ENCODE measurements at regions of chr1 and their contacts with region 1.

Region 1: GRCh38 chr1:179365320-179366092 is at the start of gene AXDND1:
- DNase-seq: peak; percentile 86
- H3K4me3 ChIP-seq: peak within 1 kb of the TSS; percentile 79 to 85 (median 80)
- H3K27ac ChIP-seq: peak within 1 kb of the TSS; percentile 97
- H3K4me1 ChIP-seq: peaks cover 4% of the 10 kb centered on the region
- H3K27me3 ChIP-seq: peaks cover 0 to 1% of the 10 kb centered on the region in 2 experiments
- CTCF ChIP-seq: no peak
- POLR2A ChIP-seq: peak; percentile 32
- total RNA-seq, gene AXDND1: 0.67 TPM in 1 of 2 replicates, not detected in the other

Region 2: GRCh38 chr1:179025125-179025974 is 340.2 kb before region 1 on chr1 and contains the start of gene FAM20B:
- CTCF ChIA-PET with region 1: no interaction called
- POLR2A ChIA-PET with region 1: no interaction called
- dilution Hi-C with region 1: no loop called
- intact Hi-C with region 1: loop called (anchors 1 kb)
- DNase-seq: peak; percentile 92
- H3K4me3 ChIP-seq: peak within 1 kb of the TSS; percentile 71 to 92 (median 78)
- H3K27ac ChIP-seq: peak within 1 kb of the TSS; percentile 71
- H3K4me1 ChIP-seq: peaks cover 13% of the 10 kb centered on the region
- H3K27me3 ChIP-seq: peaks cover 10 to 21% of the 10 kb centered on the region in 2 experiments
- CTCF ChIP-seq: no peak
- POLR2A ChIP-seq: peak; percentile 6
- total RNA-seq, gene FAM20B: 35.1 and 36.2 TPM in 2 replicates

Region 3: DNA sequence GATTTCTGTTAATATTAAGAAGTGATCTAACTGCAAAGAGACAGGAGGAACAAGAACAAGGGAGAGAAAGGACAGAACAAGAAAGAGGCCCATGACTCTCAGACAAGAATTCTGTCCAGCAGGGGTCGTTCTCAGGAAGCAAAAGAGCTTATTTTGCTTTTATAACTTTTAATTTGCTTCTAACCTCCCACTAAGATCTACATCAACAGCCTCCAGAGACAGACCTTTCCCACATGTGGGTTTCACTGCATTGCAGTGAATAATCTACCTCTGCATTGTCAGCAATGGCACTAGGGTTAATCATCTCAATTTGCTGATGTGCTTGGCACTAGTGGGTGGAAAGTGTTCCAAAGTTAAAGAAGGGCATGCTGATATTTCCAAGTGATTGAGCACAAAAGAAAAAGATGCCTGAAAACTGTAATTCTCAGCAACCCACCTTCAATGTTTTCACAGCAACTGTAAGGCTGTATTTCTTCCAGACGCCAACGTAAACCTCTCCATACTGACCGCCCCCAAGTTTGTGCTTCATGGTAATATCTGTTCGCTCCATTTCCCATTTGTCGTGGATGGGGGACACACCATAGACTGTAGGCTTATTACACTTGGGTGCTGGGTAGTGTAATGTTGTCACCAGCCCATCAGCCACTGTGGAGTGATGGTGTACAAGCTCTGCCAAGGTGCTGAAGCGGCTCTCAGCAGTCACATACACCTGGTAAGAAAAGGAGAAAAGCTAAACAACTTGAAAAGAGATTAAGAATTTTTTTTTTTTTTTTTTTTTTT is 244.2 kb before region 1 on chr1:
- CTCF ChIA-PET with region 1: interaction called, 8 read pairs
- POLR2A ChIA-PET with region 1: no interaction called
- dilution Hi-C with region 1: no loop called
- intact Hi-C with region 1: loop called (anchors 1 kb)
- DNase-seq: no peak
- H3K4me3 ChIP-seq: no peak overlapping the region
- H3K27ac ChIP-seq: no peak overlapping the region
- H3K4me1 ChIP-seq: peaks cover 13% of the 10 kb centered on the region
- H3K27me3 ChIP-seq: no peaks in the 10 kb centered on the region
- CTCF ChIP-seq: peak; percentile 25 to 39
- POLR2A ChIP-seq: no peak

Region 4: GRCh38 chr1:179190861-179191260 is 174.6 kb before region 1 on chr1:
- CTCF ChIA-PET with region 1: no interaction called
- POLR2A ChIA-PET with region 1: no interaction called
- dilution Hi-C with region 1: no loop called
- intact Hi-C with region 1: loop called (anchors 1 kb)
- DNase-seq: peak; percentile 67
- H3K4me3 ChIP-seq: no peak overlapping the region
- H3K27ac ChIP-seq: peak overlapping the region; percentile 10
- H3K4me1 ChIP-seq: peaks cover 8% of the 10 kb centered on the region
- H3K27me3 ChIP-seq: no peaks in the 10 kb centered on the region
- CTCF ChIP-seq: no peak
- POLR2A ChIP-seq: no peak

Measured in endothelial cell of umbilical vein (primary cell).